ENCODE measurements at regions of chr6 and their contacts with region 1.

Region 1: GRCh38 chr6:129498950-129499842 is 210.8 kb downstream of the ARHGAP18 start:
- DNase-seq: peak; percentile 73
- H3K4me3 ChIP-seq: peak overlapping the region in 1 of 3 experiments; percentile 13
- H3K27ac ChIP-seq: no peak overlapping the region
- H3K4me1 ChIP-seq: peaks cover 34% of the 10 kb centered on the region
- H3K27me3 ChIP-seq: no peaks in the 10 kb centered on the region
- CTCF ChIP-seq: peak; percentile 21 to 36
- POLR2A ChIP-seq: no peak

Region 2: DNA sequence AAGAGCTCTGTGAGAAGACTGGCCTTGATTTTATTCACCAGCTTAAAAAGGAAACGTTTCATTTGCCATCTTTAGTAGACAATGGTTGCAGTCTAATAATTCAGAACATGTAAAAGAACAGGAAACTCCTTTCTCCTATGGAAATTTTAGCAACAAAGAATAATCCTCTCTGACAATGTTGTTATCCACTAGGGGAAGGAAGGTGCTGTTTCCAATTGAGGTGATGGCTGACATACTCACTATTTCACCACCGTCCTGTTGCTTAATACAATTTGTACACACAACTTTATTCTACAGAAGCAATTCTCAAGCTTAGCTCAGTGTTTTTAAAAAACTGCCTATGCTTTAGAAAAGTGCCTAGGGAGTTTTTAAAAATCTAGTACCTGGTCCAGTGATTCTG is 18.1 kb after region 1 on chr6:
- CTCF ChIA-PET with region 1: interaction called, 18 read pairs
- POLR2A ChIA-PET with region 1: no interaction called
- dilution Hi-C with region 1: no loop called
- intact Hi-C with region 1: no loop called
- DNase-seq: peak; percentile 55
- H3K4me3 ChIP-seq: no peak overlapping the region
- H3K27ac ChIP-seq: no peak overlapping the region
- H3K4me1 ChIP-seq: peaks cover 2% of the 10 kb centered on the region
- H3K27me3 ChIP-seq: no peaks in the 10 kb centered on the region
- CTCF ChIP-seq: no peak
- POLR2A ChIP-seq: no peak

Region 3: GRCh38 chr6:129575378-129576118 is 76.4 kb after region 1 on chr6:
- CTCF ChIA-PET with region 1: interaction called, 33 read pairs
- POLR2A ChIA-PET with region 1: no interaction called
- dilution Hi-C with region 1: no loop called
- intact Hi-C with region 1: loop called (anchors 1 kb)
- DNase-seq: peak; percentile 72
- H3K4me3 ChIP-seq: peak overlapping the region in 1 of 3 experiments; percentile 19
- H3K27ac ChIP-seq: peak overlapping the region; percentile 80
- H3K4me1 ChIP-seq: peaks cover 32% of the 10 kb centered on the region
- H3K27me3 ChIP-seq: no peaks in the 10 kb centered on the region
- CTCF ChIP-seq: peak; percentile 50 to 54
- POLR2A ChIP-seq: no peak

Region 4: GRCh38 chr6:129730477-129731165 is 231.4 kb after region 1 on chr6:
- CTCF ChIA-PET with region 1: interaction called, 7 read pairs
- POLR2A ChIA-PET with region 1: no interaction called
- dilution Hi-C with region 1: no loop called
- intact Hi-C with region 1: loop called (anchors 1 kb)
- DNase-seq: peak; percentile 63
- H3K4me3 ChIP-seq: no peak overlapping the region
- H3K27ac ChIP-seq: no peak overlapping the region
- H3K4me1 ChIP-seq: peaks cover 7% of the 10 kb centered on the region
- H3K27me3 ChIP-seq: no peaks in the 10 kb centered on the region
- CTCF ChIP-seq: peak; percentile 29 to 40
- POLR2A ChIP-seq: no peak

Region 5: GRCh38 chr6:129893640-129894039 is 394.4 kb after region 1 on chr6:
- CTCF ChIA-PET with region 1: interaction called, 4 read pairs
- POLR2A ChIA-PET with region 1: no interaction called
- dilution Hi-C with region 1: no loop called
- intact Hi-C with region 1: loop called (anchors 5 kb)
- DNase-seq: peak; percentile 58
- H3K4me3 ChIP-seq: no peak overlapping the region
- H3K27ac ChIP-seq: no peak overlapping the region
- H3K4me1 ChIP-seq: peaks cover 20% of the 10 kb centered on the region
- H3K27me3 ChIP-seq: no peaks in the 10 kb centered on the region
- CTCF ChIP-seq: peak; percentile 23 to 24
- POLR2A ChIP-seq: no peak

Measured in endothelial cell of umbilical vein (primary cell).